ENCODE measurements at regions of chr3 and their contacts with region 1.

Region 1: GRCh38 chr3:11379233-11379823 is 107.1 kb downstream of the ATG7 start:
- DNase-seq: peak in 5 of 35 experiments; percentile 1 to 66 (median 10)
- ATAC-seq: peak in 1 of 4 experiments; percentile 43
- H3K4me3 ChIP-seq: no peak overlapping the region
- H3K4me3 Mint-ChIP-seq: no peak overlapping the region
- H3K27ac ChIP-seq: no peak overlapping the region
- H3K27ac Mint-ChIP-seq: no peak overlapping the region
- H3K4me1 ChIP-seq: no peaks in the 10 kb centered on the region
- H3K4me1 Mint-ChIP-seq: no peaks in the 10 kb centered on the region
- H3K27me3 ChIP-seq: no peaks in the 10 kb centered on the region
- H3K27me3 Mint-ChIP-seq: no peaks in the 10 kb centered on the region

Region 2: GRCh38 chr3:11651900-11652299 is 272.6 kb after region 1 on chr3:
- CTCF ChIA-PET with region 1: interaction called, 12 to 44 read pairs
- POLR2A ChIA-PET with region 1: interaction called, 3 to 6 read pairs
- DNase-seq: peak in 1 of 35 experiments; percentile 71
- ATAC-seq: peak in 1 of 4 experiments; percentile 50
- H3K4me3 ChIP-seq: no peak overlapping the region
- H3K4me3 Mint-ChIP-seq: no peak overlapping the region
- H3K27ac ChIP-seq: no peak overlapping the region
- H3K27ac Mint-ChIP-seq: no peak overlapping the region
- H3K4me1 ChIP-seq: peaks cover 0 to 4% of the 10 kb centered on the region in 2 experiments
- H3K4me1 Mint-ChIP-seq: peaks cover 3 to 10% (median 9%) of the 10 kb centered on the region in 3 donors
- H3K27me3 ChIP-seq: no peaks in the 10 kb centered on the region
- H3K27me3 Mint-ChIP-seq: no peaks in the 10 kb centered on the region

Region 3: DNA sequence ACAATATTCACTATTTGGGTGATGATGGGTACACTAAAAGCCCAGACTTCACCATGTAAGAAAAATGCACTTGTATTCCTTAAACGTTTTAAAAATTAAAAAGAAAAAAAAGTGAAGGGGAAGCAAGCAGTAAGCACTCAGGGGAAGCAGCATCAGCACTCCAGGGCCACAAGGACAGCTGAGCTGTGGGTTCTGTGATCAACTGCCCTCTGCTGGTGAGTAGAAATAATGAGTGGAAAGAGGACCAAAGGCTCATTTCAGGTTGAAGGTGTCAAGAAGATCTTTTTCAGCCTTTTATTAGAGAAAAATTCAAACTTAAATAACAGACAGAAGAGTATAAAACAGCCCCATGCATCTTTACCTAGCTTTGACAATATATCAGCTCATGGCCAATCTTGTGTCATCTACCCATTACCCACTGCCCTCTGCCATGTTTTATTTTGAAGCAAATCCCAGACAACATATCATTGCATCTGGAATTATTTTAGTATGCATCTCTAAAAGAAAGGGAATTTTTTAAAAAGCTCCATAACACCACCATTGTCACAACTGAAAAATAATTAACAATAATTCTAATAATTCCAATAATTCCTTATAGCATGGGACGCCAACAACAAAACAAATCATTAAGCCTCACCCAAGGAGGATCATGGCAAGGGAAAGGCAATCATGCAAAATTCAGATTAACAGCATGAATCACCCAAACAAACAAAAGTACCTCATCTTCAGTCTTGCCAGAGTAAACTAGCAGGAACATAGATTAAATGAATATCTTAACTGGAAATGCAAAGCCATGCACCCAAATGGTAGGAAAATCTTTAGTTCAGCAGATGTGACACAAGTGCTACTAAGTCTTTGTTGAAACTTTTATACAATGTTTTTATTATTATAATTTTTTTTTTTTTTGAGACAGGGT is 424.9 kb after region 1 on chr3:
- CTCF ChIA-PET with region 1: interaction called, 10 to 17 read pairs
- POLR2A ChIA-PET with region 1: no interaction called
- DNase-seq: peak in 31 of 35 experiments; percentile 2 to 68 (median 19)
- ATAC-seq: peak; percentile 70 to 83 (median 74)
- H3K4me3 ChIP-seq: no peak overlapping the region
- H3K4me3 Mint-ChIP-seq: no peak overlapping the region
- H3K27ac ChIP-seq: no peak overlapping the region
- H3K27ac Mint-ChIP-seq: no peak overlapping the region
- H3K4me1 ChIP-seq: no peaks in the 10 kb centered on the region
- H3K4me1 Mint-ChIP-seq: peaks cover 2 to 12% (median 8%) of the 10 kb centered on the region in 3 donors
- H3K27me3 ChIP-seq: no peaks in the 10 kb centered on the region
- H3K27me3 Mint-ChIP-seq: no peaks in the 10 kb centered on the region